Ovary (tissue), 10 donors: ENCODE measurements at regions of chr2 and their contacts with region 1.

Region 1: GRCh38 chr2:96116879-96117697 is 717 bp upstream of the ADRA2B start:
- DNase-seq: peak in 3 of 5 donors; percentile 30 to 63 (median 61)
- H3K4me3 ChIP-seq: peak overlapping the region; percentile 32
- H3K27ac ChIP-seq: no peak overlapping the region
- H3K4me1 ChIP-seq: peaks cover 1% of the 10 kb centered on the region
- H3K27me3 ChIP-seq: no peaks in the 10 kb centered on the region
- CTCF ChIP-seq: peak; percentile 19 to 78 (median 76)
- EP300 ChIP-seq: no peak
- POLR2A ChIP-seq: no peak

Region 2: GRCh38 chr2:96024336-96025193 is 92.5 kb before region 1 on chr2:
- intact Hi-C with region 1: loop called in 1 of 4 experiments (anchors 10 kb)
- DNase-seq: no peak
- H3K4me3 ChIP-seq: no peak overlapping the region
- H3K27ac ChIP-seq: no peak overlapping the region
- H3K4me1 ChIP-seq: no peaks in the 10 kb centered on the region
- H3K27me3 ChIP-seq: no peaks in the 10 kb centered on the region
- CTCF ChIP-seq: no peak
- EP300 ChIP-seq: no peak
- POLR2A ChIP-seq: no peak